ENCODE measurements at regions of chr11 and their contacts with region 1.

Region 1: GRCh38 chr11:61581030-61581928 is at the start of gene SYT7:
- DNase-seq: peak; percentile 95
- ATAC-seq: peak; percentile 86
- total RNA-seq, gene SYT7: 28.2 TPM

Region 2: DNA sequence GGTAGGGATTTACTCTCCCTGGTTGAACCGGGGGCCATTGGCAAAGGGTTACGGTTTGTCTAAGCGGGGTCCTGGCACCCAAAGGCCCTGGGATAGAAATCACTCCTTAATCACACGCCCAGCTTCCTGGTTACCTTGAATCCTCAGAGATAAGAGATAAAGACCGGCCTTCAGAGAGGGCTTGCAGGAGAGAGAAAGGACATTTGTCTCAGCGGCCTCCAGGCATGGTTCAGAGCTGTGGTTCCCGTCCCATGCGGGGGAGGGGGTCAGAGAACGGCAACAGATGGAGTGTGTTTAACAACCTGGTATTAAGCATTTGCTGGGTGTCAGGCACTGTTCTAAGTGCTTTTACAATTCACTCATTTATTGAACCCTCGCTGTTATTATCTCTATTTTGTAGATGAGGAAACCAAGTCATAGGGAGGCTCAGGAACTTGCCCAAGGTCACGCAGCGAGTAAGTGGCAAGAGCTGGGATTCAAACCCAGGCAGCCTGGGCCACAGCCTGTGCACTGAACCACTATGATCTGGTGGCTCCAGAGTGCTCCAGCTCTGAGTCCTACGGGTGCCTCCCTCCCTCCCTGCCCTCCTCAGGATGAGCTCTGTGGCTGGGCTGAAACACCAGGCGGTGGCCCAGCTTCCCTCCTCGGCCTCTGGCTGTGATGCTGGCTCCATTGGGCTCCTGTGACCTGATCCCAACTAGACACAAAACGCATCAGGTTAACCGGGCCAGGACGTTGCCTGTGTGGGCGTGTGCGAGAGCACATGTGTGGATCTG is 54.1 kb before region 1 on chr11:
- intact Hi-C with region 1: loop called (anchors 2 kb)
- DNase-seq: peak; percentile 28
- ATAC-seq: no peak

Region 3: DNA sequence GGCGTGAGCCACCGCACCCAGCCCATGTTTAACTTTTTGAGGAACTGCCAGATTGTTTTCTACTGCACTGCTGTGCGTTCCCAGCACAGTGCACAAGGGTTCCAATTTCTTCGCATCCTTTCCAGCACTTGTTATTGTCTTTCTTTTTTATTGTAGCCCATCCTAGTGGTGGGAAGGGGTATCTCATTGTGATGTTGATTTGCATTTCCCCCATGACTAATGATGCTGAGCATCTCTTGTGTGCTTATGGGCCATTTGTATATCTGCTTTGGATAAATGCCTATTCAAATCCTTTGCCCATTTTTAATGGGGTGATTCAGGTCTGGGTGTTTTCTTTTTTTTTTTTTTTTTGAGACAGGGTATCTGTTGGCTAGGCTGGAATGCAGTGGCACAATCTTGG is 36.2 kb after region 1 on chr11:
- intact Hi-C with region 1: no loop called
- DNase-seq: no peak
- ATAC-seq: no peak

Region 4: DNA sequence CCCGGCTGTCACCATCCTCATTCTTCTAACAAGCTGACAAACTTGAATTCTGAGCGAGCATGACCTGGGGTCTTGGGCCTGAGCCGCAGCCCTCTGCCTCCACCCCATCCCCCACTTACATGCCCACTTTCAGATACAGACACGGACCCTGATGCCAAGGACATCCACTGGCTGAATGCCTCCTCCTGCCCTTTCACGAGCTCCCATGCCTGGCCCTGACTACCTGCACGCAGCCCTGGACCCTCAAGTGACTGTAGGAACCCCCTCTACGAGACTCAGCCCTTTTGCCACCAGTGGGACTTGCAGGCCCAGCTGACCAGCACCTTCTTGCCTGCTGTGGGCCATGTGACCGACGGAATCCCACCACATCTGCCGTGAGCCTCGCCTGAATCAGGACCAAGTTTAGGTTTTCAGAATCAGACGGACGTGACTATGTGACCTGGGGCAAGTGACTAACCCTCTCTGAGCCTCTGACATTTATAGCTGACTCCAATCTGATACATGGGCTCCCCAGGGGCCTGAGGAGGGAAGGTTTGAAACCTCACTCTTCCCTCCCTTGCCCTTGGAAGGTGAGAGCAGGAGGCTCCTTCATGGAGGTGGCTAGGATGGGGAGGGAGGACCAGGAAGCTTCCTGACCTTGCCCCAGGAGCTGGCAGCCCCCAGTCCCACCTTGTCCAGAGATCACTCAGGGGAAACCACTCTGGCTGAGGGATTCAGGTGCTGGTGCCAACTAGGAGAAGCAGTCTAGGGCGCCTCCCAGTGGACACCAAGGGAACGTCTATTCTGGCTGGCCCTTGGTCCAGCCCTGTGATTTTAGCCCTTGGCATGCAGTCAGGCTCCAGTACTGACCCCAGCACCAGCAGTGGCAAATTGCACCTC is 46.5 kb after region 1 on chr11:
- intact Hi-C with region 1: loop called (anchors 1 kb)
- DNase-seq: peak; percentile 77
- ATAC-seq: peak; percentile 76

Measured in Right ventricle myocardium inferior (tissue), 1 donor.